T-cell (primary cell): ENCODE measurements at regions of chr14 and their contacts with region 1.

Region 1: GRCh38 chr14:60266021-60266937 is 17.3 kb downstream of the PPM1A start:
- DNase-seq: peak in 13 of 35 experiments; percentile 8 to 53 (median 19)
- ATAC-seq: peak; percentile 60 to 71 (median 63)
- H3K4me3 ChIP-seq: no peak overlapping the region
- H3K4me3 Mint-ChIP-seq: no peak overlapping the region
- H3K27ac ChIP-seq: no peak overlapping the region
- H3K27ac Mint-ChIP-seq: no peak overlapping the region
- H3K4me1 ChIP-seq: peaks cover 0 to 3% of the 10 kb centered on the region in 2 experiments
- H3K4me1 Mint-ChIP-seq: peaks cover 38 to 50% (median 48%) of the 10 kb centered on the region in 3 donors
- H3K27me3 ChIP-seq: no peaks in the 10 kb centered on the region
- H3K27me3 Mint-ChIP-seq: no peaks in the 10 kb centered on the region

Region 2: GRCh38 chr14:60164712-60165546 is 101.3 kb before region 1 on chr14 and contains the start of gene DHRS7:
- CTCF ChIA-PET with region 1: no interaction called
- POLR2A ChIA-PET with region 1: interaction called in 1 of 2 experiments, 11 read pairs
- DNase-seq: peak; percentile 26 to 83 (median 49)
- ATAC-seq: peak; percentile 78 to 84 (median 80)
- H3K4me3 ChIP-seq: peak within 1 kb of the TSS; percentile 89 to 92
- H3K4me3 Mint-ChIP-seq: peak within 1 kb of the TSS; percentile 94 to 100 (median 99)
- H3K27ac ChIP-seq: peak within 1 kb of the TSS; percentile 97
- H3K27ac Mint-ChIP-seq: peak within 1 kb of the TSS; percentile 99 to 100
- H3K4me1 ChIP-seq: peaks cover 3 to 32% of the 10 kb centered on the region in 2 experiments
- H3K4me1 Mint-ChIP-seq: peaks cover 41 to 53% (median 50%) of the 10 kb centered on the region in 3 donors
- H3K27me3 ChIP-seq: no peaks in the 10 kb centered on the region
- H3K27me3 Mint-ChIP-seq: no peaks in the 10 kb centered on the region
- total RNA-seq, gene DHRS7: 37.1 to 66.9 (median 54.0) TPM

Region 3: GRCh38 chr14:60221457-60221856 is 44.8 kb before region 1 on chr14:
- CTCF ChIA-PET with region 1: interaction called in 1 of 2 experiments, 16 read pairs
- POLR2A ChIA-PET with region 1: no interaction called
- DNase-seq: no peak
- ATAC-seq: no peak
- H3K4me3 ChIP-seq: no peak overlapping the region
- H3K4me3 Mint-ChIP-seq: no peak overlapping the region
- H3K27ac ChIP-seq: no peak overlapping the region
- H3K27ac Mint-ChIP-seq: no peak overlapping the region
- H3K4me1 ChIP-seq: no peaks in the 10 kb centered on the region
- H3K4me1 Mint-ChIP-seq: peaks cover 0 to 2% (median 0%) of the 10 kb centered on the region in 3 donors
- H3K27me3 ChIP-seq: no peaks in the 10 kb centered on the region
- H3K27me3 Mint-ChIP-seq: no peaks in the 10 kb centered on the region

Region 4: GRCh38 chr14:60248697-60249318 is 17.5 kb before region 1 on chr14 and contains the start of gene PPM1A:
- CTCF ChIA-PET with region 1: interaction called, 3 to 15 read pairs
- POLR2A ChIA-PET with region 1: interaction called in 1 of 2 experiments, 6 read pairs
- DNase-seq: peak; percentile 88 to 99 (median 96)
- ATAC-seq: peak; percentile 79 to 83 (median 79)
- H3K4me3 ChIP-seq: peak within 1 kb of the TSS; percentile 83 to 91
- H3K4me3 Mint-ChIP-seq: peak within 1 kb of the TSS; percentile 88 to 96 (median 94)
- H3K27ac ChIP-seq: peak within 1 kb of the TSS; percentile 98
- H3K27ac Mint-ChIP-seq: peak within 1 kb of the TSS; percentile 99
- H3K4me1 ChIP-seq: peaks cover 21 to 32% of the 10 kb centered on the region in 2 experiments
- H3K4me1 Mint-ChIP-seq: peaks cover 49 to 67% (median 53%) of the 10 kb centered on the region in 3 donors
- H3K27me3 ChIP-seq: no peaks in the 10 kb centered on the region
- H3K27me3 Mint-ChIP-seq: no peaks in the 10 kb centered on the region
- total RNA-seq, gene PPM1A: 42.8 to 71.6 (median 46.1) TPM

Region 5: DNA sequence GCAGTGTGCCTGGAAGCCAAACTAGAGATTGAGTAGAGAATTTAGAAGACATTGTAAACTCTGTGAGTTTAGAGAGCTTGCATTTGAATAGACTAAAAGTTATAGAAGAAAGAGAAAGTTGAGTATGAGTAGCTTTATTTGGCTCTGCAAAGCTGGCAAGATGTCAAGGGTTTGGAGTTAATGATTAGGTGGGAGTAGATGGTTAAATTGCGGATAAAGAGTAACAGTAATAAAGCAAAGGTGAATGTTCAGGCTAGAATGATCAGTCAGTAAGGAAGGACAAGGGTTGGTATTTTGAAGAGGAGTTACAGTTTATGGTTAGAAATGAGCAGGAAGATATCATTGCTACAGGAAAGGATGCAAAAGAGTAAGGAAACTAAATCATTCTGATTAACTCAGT is 12.1 kb before region 1 on chr14:
- CTCF ChIA-PET with region 1: interaction called, 5 to 18 read pairs
- POLR2A ChIA-PET with region 1: interaction called, 3 to 6 read pairs
- DNase-seq: no peak
- ATAC-seq: no peak
- H3K4me3 ChIP-seq: no peak overlapping the region
- H3K4me3 Mint-ChIP-seq: no peak overlapping the region
- H3K27ac ChIP-seq: no peak overlapping the region
- H3K27ac Mint-ChIP-seq: no peak overlapping the region
- H3K4me1 ChIP-seq: peaks cover 7 to 36% of the 10 kb centered on the region in 2 experiments
- H3K4me1 Mint-ChIP-seq: peaks cover 75 to 87% (median 77%) of the 10 kb centered on the region in 3 donors
- H3K27me3 ChIP-seq: no peaks in the 10 kb centered on the region
- H3K27me3 Mint-ChIP-seq: no peaks in the 10 kb centered on the region